Activated CD4-positive, alpha-beta T cell treated with anti-CD3 and anti-CD28 coated beads for 36 hours (primary cell): ENCODE measurements at regions of chr3 and their contacts with region 1.

Region 1: GRCh38 chr3:184229394-184230080 is at the start of gene VWA5B2:
- DNase-seq: peak; percentile 78
- ATAC-seq: peak; percentile 93
- H3K4me3 Mint-ChIP-seq: peak within 1 kb of the TSS; percentile 56
- H3K27ac Mint-ChIP-seq: no peak within 1 kb of the TSS
- H3K4me1 Mint-ChIP-seq: peaks cover 6% of the 10 kb centered on the region
- H3K27me3 Mint-ChIP-seq: peaks cover 50% of the 10 kb centered on the region
- total RNA-seq, gene VWA5B2: not detected

Region 2: GRCh38 chr3:183937610-183938230 is 291.8 kb before region 1 on chr3:
- CTCF ChIA-PET with region 1: no interaction called
- POLR2A ChIA-PET with region 1: no interaction called
- intact Hi-C with region 1: no loop called
- DNase-seq: no peak
- ATAC-seq: no peak
- H3K4me3 Mint-ChIP-seq: no peak overlapping the region
- H3K27ac Mint-ChIP-seq: no peak overlapping the region
- H3K4me1 Mint-ChIP-seq: no peaks in the 10 kb centered on the region
- H3K27me3 Mint-ChIP-seq: no peaks in the 10 kb centered on the region

Region 3: GRCh38 chr3:184209146-184209923 is 20.2 kb before region 1 on chr3:
- CTCF ChIA-PET with region 1: interaction called, 14 read pairs
- POLR2A ChIA-PET with region 1: no interaction called
- intact Hi-C with region 1: no loop called
- DNase-seq: no peak
- ATAC-seq: no peak
- H3K4me3 Mint-ChIP-seq: no peak overlapping the region
- H3K27ac Mint-ChIP-seq: no peak overlapping the region
- H3K4me1 Mint-ChIP-seq: no peaks in the 10 kb centered on the region
- H3K27me3 Mint-ChIP-seq: peaks cover 15% of the 10 kb centered on the region

Region 4: DNA sequence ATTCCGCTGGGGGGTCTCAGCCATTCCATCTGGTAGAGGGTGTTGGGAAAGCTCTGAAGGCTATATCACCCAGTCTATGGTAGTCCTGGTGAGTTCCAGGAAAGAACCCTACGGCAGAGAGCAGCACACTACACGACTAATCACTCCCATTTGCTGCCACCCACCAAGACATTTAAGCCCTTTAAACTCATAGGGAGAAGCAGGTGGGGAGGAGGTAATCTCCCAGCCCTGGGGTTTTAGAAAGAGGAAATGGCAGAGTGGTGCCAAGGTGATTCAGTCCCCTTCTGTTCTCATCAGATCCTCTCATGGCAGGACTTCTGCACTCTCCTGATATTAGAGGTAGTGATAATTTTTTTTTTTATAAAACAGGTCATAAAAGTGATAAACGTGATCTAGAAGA is 10.7 kb before region 1 on chr3:
- CTCF ChIA-PET with region 1: interaction called, 10 read pairs
- POLR2A ChIA-PET with region 1: no interaction called
- intact Hi-C with region 1: no loop called
- DNase-seq: no peak
- ATAC-seq: no peak
- H3K4me3 Mint-ChIP-seq: no peak overlapping the region
- H3K27ac Mint-ChIP-seq: no peak overlapping the region
- H3K4me1 Mint-ChIP-seq: no peaks in the 10 kb centered on the region
- H3K27me3 Mint-ChIP-seq: peaks cover 10% of the 10 kb centered on the region

Region 5: GRCh38 chr3:184241447-184242296 is 12.1 kb after region 1 on chr3:
- CTCF ChIA-PET with region 1: interaction called, 33 read pairs
- POLR2A ChIA-PET with region 1: interaction called, 9 read pairs
- intact Hi-C with region 1: no loop called
- DNase-seq: peak; percentile 44
- ATAC-seq: peak; percentile 71
- H3K4me3 Mint-ChIP-seq: no peak overlapping the region
- H3K27ac Mint-ChIP-seq: no peak overlapping the region
- H3K4me1 Mint-ChIP-seq: peaks cover 4% of the 10 kb centered on the region
- H3K27me3 Mint-ChIP-seq: no peaks in the 10 kb centered on the region

Region 6: GRCh38 chr3:184255291-184256039 is 25.9 kb after region 1 on chr3:
- CTCF ChIA-PET with region 1: interaction called, 29 read pairs
- POLR2A ChIA-PET with region 1: interaction called, 4 read pairs
- intact Hi-C with region 1: loop called in 1 of 2 experiments (anchors 1 kb)
- DNase-seq: peak; percentile 63
- ATAC-seq: peak; percentile 64
- H3K4me3 Mint-ChIP-seq: no peak overlapping the region
- H3K27ac Mint-ChIP-seq: peak overlapping the region; percentile 34
- H3K4me1 Mint-ChIP-seq: peaks cover 11% of the 10 kb centered on the region
- H3K27me3 Mint-ChIP-seq: peaks cover 5% of the 10 kb centered on the region

Region 7: DNA sequence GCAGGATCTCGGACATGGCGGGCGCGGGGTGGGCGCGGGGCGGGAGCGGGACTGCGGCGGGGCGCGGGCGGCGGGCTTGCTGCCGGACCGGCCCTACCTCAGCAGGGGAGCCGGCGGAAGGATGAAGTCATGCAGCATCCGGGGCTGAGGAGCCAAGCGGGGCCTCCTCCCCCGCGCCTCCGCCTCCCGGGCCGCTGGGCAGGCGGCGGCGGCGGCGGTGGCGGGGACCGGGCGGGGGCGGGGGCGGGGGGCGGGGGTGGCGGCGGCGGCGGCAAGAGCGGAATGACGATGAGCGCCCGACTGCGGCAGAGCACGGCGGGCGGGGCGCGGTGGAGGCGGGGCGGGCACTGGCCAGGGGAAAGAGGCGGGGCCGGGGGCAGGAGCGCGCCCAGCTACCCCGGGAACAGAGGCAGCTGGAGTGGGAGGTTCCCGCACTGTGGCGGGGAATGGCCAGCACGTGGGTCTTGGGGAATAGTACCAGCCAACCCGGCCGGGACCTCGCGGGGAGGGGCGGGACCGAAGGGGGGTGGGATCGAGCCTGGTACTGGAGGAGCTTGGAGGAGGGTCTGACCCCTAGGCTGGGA is 31.8 kb after region 1 on chr3 and contains the start of gene CAMK2N2:
- CTCF ChIA-PET with region 1: interaction called, 8 read pairs
- POLR2A ChIA-PET with region 1: no interaction called
- intact Hi-C with region 1: loop called in 1 of 2 experiments (anchors 1 kb)
- DNase-seq: peak; percentile 73
- ATAC-seq: peak; percentile 59
- H3K4me3 Mint-ChIP-seq: peak within 1 kb of the TSS; percentile 73
- H3K27ac Mint-ChIP-seq: no peak within 1 kb of the TSS
- H3K4me1 Mint-ChIP-seq: peaks cover 20% of the 10 kb centered on the region
- H3K27me3 Mint-ChIP-seq: peaks cover 31% of the 10 kb centered on the region
- total RNA-seq, gene CAMK2N2: 0.18 to 0.25 TPM

Region 8: GRCh38 chr3:184289426-184289938 is 59.9 kb after region 1 on chr3:
- CTCF ChIA-PET with region 1: interaction called, 14 read pairs
- POLR2A ChIA-PET with region 1: interaction called, 3 read pairs
- intact Hi-C with region 1: loop called (anchors 1 to 2 kb)
- DNase-seq: peak; percentile 85
- ATAC-seq: peak; percentile 87
- H3K4me3 Mint-ChIP-seq: no peak overlapping the region
- H3K27ac Mint-ChIP-seq: no peak overlapping the region
- H3K4me1 Mint-ChIP-seq: no peaks in the 10 kb centered on the region
- H3K27me3 Mint-ChIP-seq: peaks cover 9% of the 10 kb centered on the region